Aorta (tissue), 5 donors: ENCODE measurements at regions of chr10 and their contacts with region 1.

Region 1: GRCh38 chr10:4649886-4650508 is 176.0 kb upstream of the AKR1E2 start:
- DNase-seq: no peak
- ATAC-seq: no peak
- H3K4me3 ChIP-seq: no peak overlapping the region
- H3K27ac ChIP-seq: peak overlapping the region; percentile 52 to 88
- H3K4me1 ChIP-seq: peaks cover 4% of the 10 kb centered on the region in 2 donors
- H3K27me3 ChIP-seq: no peaks in the 10 kb centered on the region

Region 2: DNA sequence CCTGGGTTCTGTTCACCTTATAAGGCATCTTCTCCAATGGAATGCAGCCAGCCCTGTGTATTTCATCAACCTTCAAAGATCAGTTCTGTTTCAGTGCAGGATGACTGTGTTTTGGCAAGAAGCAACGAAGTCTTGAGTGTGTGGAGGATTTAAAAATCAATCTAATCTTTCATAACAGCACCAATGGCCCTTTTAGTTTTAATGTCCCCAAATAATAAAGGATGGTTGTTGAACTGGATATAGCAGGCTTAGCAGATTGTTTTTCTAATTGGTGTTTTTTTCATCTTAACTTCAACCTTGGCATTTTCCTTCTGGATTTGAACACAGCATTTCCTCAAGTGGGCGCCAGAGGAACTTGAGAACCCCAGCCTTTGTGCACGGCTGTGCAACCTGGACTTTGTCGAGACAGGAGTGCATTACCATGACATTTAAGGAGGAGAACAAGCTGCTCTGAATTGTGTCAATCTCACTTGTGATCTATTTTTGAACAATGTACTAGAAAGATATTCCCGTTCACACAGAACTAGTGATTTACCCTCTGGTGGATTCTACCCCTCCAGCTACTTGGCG is 137.2 kb before region 1 on chr10:
- intact Hi-C with region 1: loop called in 1 of 2 experiments (anchors 10 kb)
- DNase-seq: peak in 1 of 2 donors; percentile 48
- ATAC-seq: no peak
- H3K4me3 ChIP-seq: no peak overlapping the region
- H3K27ac ChIP-seq: no peak overlapping the region
- H3K4me1 ChIP-seq: no peaks in the 10 kb centered on the region
- H3K27me3 ChIP-seq: no peaks in the 10 kb centered on the region

Region 3: GRCh38 chr10:4532467-4532866 is 117.5 kb before region 1 on chr10:
- intact Hi-C with region 1: loop called in 1 of 2 experiments (anchors 10 kb)
- DNase-seq: no peak
- ATAC-seq: peak; percentile 41
- H3K4me3 ChIP-seq: no peak overlapping the region
- H3K27ac ChIP-seq: no peak overlapping the region
- H3K4me1 ChIP-seq: no peaks in the 10 kb centered on the region
- H3K27me3 ChIP-seq: no peaks in the 10 kb centered on the region

Region 4: DNA sequence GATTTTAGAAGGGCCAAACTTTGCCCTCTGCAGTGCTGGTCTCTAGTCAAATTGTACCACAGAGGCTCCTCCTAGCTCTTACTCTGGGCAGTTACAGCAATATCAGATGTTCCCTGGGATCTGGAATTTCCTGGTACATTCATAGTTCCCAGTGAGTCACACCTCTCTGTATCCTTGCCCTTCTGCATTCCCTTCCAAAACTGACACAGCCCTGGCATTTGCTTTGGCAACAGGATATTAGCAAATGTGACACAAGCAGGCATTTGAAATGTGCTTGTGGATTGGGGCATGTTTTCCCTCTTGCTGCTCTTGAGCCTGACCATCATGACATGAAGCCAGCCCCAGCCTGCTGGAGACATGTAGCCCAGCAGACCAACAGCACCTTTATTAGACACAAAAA is 108.7 kb before region 1 on chr10:
- intact Hi-C with region 1: loop called (anchors 10 kb)
- DNase-seq: peak; percentile 73 to 74
- ATAC-seq: peak; percentile 85
- H3K4me3 ChIP-seq: no peak overlapping the region
- H3K27ac ChIP-seq: peak overlapping the region; percentile 72 to 94
- H3K4me1 ChIP-seq: no peaks in the 10 kb centered on the region
- H3K27me3 ChIP-seq: no peaks in the 10 kb centered on the region